H1 (cell line): ENCODE measurements at regions of chr17 and their contacts with region 1.

Region 1: DNA sequence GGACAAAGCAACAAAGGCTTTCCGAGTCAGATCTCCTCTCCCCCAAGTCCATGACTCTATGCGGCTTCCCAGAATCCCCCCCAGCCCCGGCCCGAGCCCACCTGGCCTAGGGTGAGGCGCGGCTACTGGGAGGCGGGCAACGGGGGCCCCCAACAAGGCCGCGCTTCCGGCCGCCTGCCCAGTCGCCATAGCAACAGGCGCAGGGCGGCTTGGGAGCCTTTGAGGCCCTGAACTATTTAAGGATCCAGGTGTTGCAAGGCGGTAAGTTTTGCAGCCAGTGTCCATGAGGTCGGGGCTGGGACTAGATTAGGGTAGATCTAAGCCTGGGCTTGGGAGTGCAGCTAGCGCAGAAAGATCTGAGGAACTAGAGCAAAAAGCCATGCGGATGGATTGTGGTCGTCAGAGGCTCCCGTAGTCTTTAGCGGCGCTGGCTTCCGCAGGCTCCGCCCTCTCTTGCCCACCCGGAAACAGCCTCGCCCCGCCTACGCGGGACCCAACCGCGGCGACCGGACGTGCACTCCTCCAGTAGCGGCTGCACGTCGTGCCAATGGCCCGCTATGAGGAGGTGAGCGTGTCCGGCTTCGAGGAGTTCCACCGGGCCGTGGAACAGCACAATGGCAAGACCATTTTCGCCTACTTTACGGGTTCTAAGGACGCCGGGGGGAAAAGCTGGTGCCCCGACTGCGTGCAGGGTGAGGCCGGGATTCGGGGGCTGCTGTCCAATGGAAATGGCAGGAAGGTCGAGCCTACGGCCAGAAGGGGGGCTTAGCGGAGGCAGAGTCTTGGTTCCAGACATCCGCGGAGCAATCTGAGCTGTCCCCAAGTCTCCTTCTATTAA is at the starts of genes KIAA0753 and TXNDC17:
- DNase-seq: peak; percentile 70 to 92
- H3K4me3 ChIP-seq: peak within 1 kb of the TSS; percentile 87 to 98 (median 92)
- H3K27ac ChIP-seq: peak within 1 kb of the TSS; percentile 95
- H3K4me1 ChIP-seq: peaks cover 0 to 10% (median 2%) of the 10 kb centered on the region in 4 experiments; a peak in 4 of 7 replicates
- H3K27me3 ChIP-seq: no peaks in the 10 kb centered on the region
- CTCF ChIP-seq: no peak
- EP300 ChIP-seq: no peak
- POLR2A ChIP-seq: peak; percentile 10 to 95
- RAD21 ChIP-seq: no peak; a peak in 1 of 4 replicates
- total RNA-seq, gene KIAA0753: 27.1 and 29.2 TPM in 2 replicates
- total RNA-seq, gene TXNDC17: 182 and 192 TPM in 2 replicates

Region 2: DNA sequence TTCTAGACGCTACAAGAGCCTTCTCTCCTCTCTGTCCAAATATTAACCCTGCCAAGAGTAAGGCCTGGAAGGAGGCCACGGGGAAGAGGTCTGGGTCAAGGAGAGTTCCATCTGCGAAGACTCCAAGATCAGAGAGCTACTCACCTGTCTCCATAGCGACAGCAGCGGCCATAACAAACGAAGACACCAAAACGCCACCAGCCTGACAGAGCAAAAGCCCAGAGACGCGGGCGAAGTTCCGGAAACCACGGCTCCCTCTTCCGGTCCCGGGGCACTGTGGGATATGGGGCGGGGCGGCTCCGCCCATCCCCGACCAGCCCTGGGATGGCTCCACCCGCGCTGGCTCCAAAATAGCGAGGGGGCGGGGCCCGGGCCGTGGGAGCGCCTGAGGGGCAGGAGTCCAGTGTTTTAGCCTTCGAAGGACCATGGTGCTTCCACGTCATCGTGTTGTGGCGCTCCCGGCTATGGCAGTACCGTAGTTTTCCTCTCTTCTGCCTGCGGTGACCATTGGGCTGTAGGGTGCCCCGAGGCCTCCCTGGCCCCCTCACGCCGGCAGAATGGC is 10.7 kb after region 1 on chr17 and contains the starts of genes C17orf100 and MED31:
- CTCF ChIA-PET with region 1: interaction called, 4 read pairs
- POLR2A ChIA-PET with region 1: interaction called, 11 read pairs
- DNase-seq: peak in 1 of 2 experiments; percentile 97
- H3K4me3 ChIP-seq: peak within 1 kb of the TSS; percentile 84 to 100 (median 88)
- H3K27ac ChIP-seq: peak within 1 kb of the TSS; percentile 67; the same call in 1 of the 2 replicates
- H3K4me1 ChIP-seq: peaks cover 3 to 22% (median 14%) of the 10 kb centered on the region in 4 experiments
- H3K27me3 ChIP-seq: peaks cover 4 to 33% (median 24%) of the 10 kb centered on the region in 4 experiments
- CTCF ChIP-seq: no peak
- EP300 ChIP-seq: no peak
- POLR2A ChIP-seq: 0 out of 3 replicates have a peak, but pooled peaks of 1 of the 2 experiments have one; percentile 23
- RAD21 ChIP-seq: no peak
- total RNA-seq, gene C17orf100: 1.6 and 2.8 TPM in 2 replicates
- total RNA-seq, gene MED31: 11.0 and 12.3 TPM in 2 replicates

Region 3: DNA sequence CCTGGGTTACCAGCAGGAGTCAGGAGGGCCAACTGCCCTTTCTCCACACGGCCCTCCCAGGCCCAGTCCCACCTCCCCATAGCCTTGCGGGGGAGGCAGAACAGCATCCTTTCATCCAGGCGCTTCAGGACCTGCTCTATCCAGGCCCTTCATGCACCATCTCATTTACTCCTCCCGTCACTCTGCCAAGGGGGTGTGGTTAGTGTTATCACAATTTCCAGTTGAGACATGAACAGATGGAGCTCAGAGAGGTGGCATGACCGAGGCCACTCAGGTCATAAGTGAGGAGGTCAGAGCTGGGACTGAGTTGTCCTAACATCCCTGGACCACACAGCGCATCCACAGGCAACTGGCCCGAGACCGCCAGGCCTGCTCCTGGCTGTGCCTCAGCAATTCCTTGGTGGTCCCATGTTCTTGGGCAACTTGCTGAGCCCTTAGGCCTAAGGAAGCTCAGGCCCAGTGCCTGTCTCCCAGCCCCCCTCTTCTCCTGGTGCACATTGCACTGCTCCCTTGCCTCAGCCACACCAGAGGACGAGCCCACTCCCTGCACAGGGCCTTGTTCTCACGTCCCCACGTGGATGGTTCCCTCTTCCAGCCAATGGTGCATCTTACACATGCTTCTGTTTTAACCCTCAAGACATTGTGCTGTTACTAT is 34.6 kb after region 1 on chr17:
- CTCF ChIA-PET with region 1: no interaction called
- POLR2A ChIA-PET with region 1: no interaction called
- DNase-seq: no peak
- H3K4me3 ChIP-seq: no peak overlapping the region
- H3K27ac ChIP-seq: no peak overlapping the region
- H3K4me1 ChIP-seq: no peaks in the 10 kb centered on the region; a peak in 1 of 7 replicates
- H3K27me3 ChIP-seq: no peaks in the 10 kb centered on the region
- CTCF ChIP-seq: no peak
- EP300 ChIP-seq: no peak
- POLR2A ChIP-seq: no peak
- RAD21 ChIP-seq: no peak